ENCODE measurements at regions of chr1 and their contacts with region 1.

Region 1: GRCh38 chr1:209354111-209354839 is 229.2 kb upstream of the CAMK1G start:
- DNase-seq: peak; percentile 68
- H3K4me3 ChIP-seq: peak overlapping the region in 1 of 2 experiments; percentile 10; a peak in 1 of 4 replicates
- H3K27ac ChIP-seq: peak overlapping the region in 1 of 2 experiments; percentile 60; a peak in 2 of 4 replicates
- H3K4me1 ChIP-seq: peaks cover 0 to 38% of the 10 kb centered on the region in 2 experiments; a peak in 2 of 4 replicates
- H3K27me3 ChIP-seq: no peaks in the 10 kb centered on the region
- CTCF ChIP-seq: peak; percentile 94
- EP300 ChIP-seq: peak; percentile 22 to 58; a peak in 3 of 4 replicates
- RAD21 ChIP-seq: peak; percentile 97

Region 2: DNA sequence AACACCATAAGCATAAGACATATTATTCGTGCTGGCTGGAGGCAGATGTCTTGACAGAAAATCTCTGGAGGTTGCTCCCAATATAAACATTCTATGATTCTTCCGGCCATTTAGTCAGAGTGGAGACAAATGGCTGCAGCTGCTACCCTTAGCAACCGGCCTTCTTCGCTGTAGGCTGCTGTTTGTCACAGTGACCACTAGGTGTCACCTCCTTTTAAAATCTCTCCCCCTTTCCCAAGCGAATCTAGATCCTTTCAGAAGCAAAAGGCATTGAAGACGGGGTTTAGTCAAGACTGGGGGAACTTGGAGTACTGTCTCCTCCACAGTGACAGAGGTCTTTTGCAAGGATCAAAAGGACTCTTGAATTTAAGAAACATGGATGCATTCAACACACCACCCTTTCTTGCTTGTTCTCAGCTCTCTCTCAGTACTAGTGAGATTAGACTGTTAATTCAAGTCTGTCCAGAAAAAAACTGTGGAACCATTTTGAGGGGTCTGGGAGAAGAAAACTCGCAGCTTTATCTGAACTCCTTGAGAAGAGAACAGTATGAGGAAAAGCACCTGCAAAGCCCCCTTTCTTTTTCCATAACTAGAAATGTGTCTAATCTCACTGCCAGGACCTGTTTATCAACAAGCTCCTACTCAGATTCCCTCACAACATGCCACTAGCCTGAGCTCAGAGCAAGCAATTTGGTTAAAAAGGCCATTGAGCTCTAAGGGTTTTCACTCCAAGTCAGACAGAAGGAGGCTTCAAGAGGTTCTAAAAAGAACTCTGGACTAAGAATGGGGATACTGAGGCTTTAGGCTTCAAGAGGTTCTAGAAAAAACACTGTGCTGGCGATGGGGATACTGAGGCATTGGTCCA is 701.7 kb before region 1 on chr1:
- CTCF ChIA-PET with region 1: interaction called, 12 read pairs
- POLR2A ChIA-PET with region 1: no interaction called
- DNase-seq: peak; percentile 80
- H3K4me3 ChIP-seq: no peak overlapping the region; a peak in 1 of 4 replicates
- H3K27ac ChIP-seq: peak overlapping the region in 1 of 2 experiments; percentile 73; a peak in 2 of 4 replicates
- H3K4me1 ChIP-seq: peaks cover 0 to 7% of the 10 kb centered on the region in 2 experiments; a peak in 2 of 4 replicates
- H3K27me3 ChIP-seq: no peaks in the 10 kb centered on the region
- CTCF ChIP-seq: peak; percentile 86
- EP300 ChIP-seq: 0 out of 4 replicates have a peak, but pooled peaks of 1 of the 2 experiments have one; percentile 24
- RAD21 ChIP-seq: peak; percentile 91

Region 3: GRCh38 chr1:209335178-209335577 is 19.1 kb before region 1 on chr1:
- CTCF ChIA-PET with region 1: interaction called, 21 read pairs
- POLR2A ChIA-PET with region 1: no interaction called
- DNase-seq: peak; percentile 59
- H3K4me3 ChIP-seq: no peak overlapping the region
- H3K27ac ChIP-seq: no peak overlapping the region
- H3K4me1 ChIP-seq: no peaks in the 10 kb centered on the region; a peak in 2 of 4 replicates
- H3K27me3 ChIP-seq: no peaks in the 10 kb centered on the region
- CTCF ChIP-seq: peak; percentile 82
- EP300 ChIP-seq: no peak
- RAD21 ChIP-seq: peak; percentile 50

Region 4: DNA sequence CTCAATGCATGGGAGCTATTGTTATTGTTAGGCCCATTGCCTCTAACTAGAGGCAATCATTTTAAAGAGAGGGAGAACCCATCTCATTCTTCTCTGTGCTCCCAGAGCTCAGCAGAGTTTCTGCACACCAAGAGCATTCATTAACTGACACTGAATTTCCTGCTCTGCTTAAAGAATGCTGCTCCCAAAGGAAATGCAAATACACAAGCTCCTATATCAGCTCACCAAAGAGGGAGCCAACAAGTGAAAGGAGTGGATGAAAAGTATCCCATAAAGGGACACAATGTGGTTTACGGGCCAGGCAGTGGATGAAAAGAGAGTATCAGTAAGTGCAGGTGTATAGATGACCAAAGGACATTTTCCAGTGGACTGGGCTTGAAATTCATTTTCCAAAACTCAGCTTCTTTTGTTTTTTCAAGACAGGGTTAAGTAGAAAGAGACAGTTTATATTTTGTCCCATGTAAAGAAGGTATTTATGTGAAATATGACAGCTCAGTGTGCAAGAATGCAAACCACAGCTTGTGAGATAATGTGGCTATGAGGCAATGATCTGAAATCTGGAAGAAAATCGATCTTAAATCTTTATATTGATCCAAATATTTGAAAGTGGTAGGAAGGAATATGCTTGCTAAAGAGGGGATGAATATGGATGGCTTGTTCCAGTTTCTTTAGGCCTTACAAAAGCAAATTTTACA is 21.5 kb after region 1 on chr1:
- CTCF ChIA-PET with region 1: interaction called, 16 read pairs
- POLR2A ChIA-PET with region 1: no interaction called
- DNase-seq: no peak
- H3K4me3 ChIP-seq: no peak overlapping the region
- H3K27ac ChIP-seq: peak overlapping the region; percentile 5 to 54; a peak in 3 of 4 replicates
- H3K4me1 ChIP-seq: peaks cover 8 to 13% of the 10 kb centered on the region in 2 experiments; a peak in 3 of 4 replicates
- H3K27me3 ChIP-seq: no peaks in the 10 kb centered on the region
- CTCF ChIP-seq: no peak
- EP300 ChIP-seq: no peak; a peak in 1 of 4 replicates
- RAD21 ChIP-seq: no peak

Region 5: GRCh38 chr1:209435654-209436566 is 81.6 kb after region 1 on chr1:
- CTCF ChIA-PET with region 1: interaction called, 11 read pairs
- POLR2A ChIA-PET with region 1: no interaction called
- DNase-seq: peak; percentile 86
- H3K4me3 ChIP-seq: no peak overlapping the region; a peak in 1 of 4 replicates
- H3K27ac ChIP-seq: peak overlapping the region in 1 of 2 experiments; percentile 47; a peak in 2 of 4 replicates
- H3K4me1 ChIP-seq: peaks cover 7 to 15% of the 10 kb centered on the region in 2 experiments; a peak in 3 of 4 replicates
- H3K27me3 ChIP-seq: no peaks in the 10 kb centered on the region
- CTCF ChIP-seq: peak; percentile 96
- EP300 ChIP-seq: no peak
- RAD21 ChIP-seq: peak; percentile 96

Region 6: DNA sequence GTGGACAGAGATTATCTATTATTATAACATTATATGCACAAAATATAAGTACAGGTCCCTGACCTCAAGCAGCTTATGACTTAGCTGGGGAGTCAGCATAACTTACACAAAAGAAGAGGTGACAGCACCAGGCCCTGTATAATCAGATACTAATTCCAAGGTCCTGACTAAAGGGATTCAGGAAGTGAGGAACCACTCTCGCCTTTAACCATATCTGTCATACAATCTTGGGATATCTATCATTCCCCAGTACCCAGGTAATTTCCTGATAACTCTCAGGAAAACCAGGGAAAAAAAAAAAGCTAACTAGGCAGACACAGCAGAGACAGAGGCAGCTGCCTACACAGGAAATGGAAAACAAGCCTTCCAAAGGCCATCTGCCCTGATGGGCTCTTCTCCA is 150.8 kb after region 1 on chr1:
- CTCF ChIA-PET with region 1: no interaction called
- POLR2A ChIA-PET with region 1: no interaction called
- DNase-seq: no peak
- H3K4me3 ChIP-seq: no peak overlapping the region
- H3K27ac ChIP-seq: no peak overlapping the region; a peak in 1 of 4 replicates
- H3K4me1 ChIP-seq: peaks cover 0 to 7% of the 10 kb centered on the region in 2 experiments; a peak in 2 of 4 replicates
- H3K27me3 ChIP-seq: no peaks in the 10 kb centered on the region
- CTCF ChIP-seq: no peak
- EP300 ChIP-seq: peak in 1 of 2 experiments; percentile 36; a peak in 1 of 4 replicates
- RAD21 ChIP-seq: no peak

Region 7: GRCh38 chr1:209747580-209748262 is 393.4 kb after region 1 on chr1:
- CTCF ChIA-PET with region 1: no interaction called
- POLR2A ChIA-PET with region 1: no interaction called
- DNase-seq: no peak
- H3K4me3 ChIP-seq: peak overlapping the region in 1 of 2 experiments; percentile 48; a peak in 1 of 4 replicates
- H3K27ac ChIP-seq: peak overlapping the region in 1 of 2 experiments; percentile 55; a peak in 1 of 4 replicates
- H3K4me1 ChIP-seq: peaks cover 13 to 25% of the 10 kb centered on the region in 2 experiments
- H3K27me3 ChIP-seq: no peaks in the 10 kb centered on the region
- CTCF ChIP-seq: peak; percentile 39
- EP300 ChIP-seq: no peak
- RAD21 ChIP-seq: no peak

Measured in SK-N-SH (cell line).